ENCODE measurements at regions of chr3 and their contacts with region 1.

Region 1: DNA sequence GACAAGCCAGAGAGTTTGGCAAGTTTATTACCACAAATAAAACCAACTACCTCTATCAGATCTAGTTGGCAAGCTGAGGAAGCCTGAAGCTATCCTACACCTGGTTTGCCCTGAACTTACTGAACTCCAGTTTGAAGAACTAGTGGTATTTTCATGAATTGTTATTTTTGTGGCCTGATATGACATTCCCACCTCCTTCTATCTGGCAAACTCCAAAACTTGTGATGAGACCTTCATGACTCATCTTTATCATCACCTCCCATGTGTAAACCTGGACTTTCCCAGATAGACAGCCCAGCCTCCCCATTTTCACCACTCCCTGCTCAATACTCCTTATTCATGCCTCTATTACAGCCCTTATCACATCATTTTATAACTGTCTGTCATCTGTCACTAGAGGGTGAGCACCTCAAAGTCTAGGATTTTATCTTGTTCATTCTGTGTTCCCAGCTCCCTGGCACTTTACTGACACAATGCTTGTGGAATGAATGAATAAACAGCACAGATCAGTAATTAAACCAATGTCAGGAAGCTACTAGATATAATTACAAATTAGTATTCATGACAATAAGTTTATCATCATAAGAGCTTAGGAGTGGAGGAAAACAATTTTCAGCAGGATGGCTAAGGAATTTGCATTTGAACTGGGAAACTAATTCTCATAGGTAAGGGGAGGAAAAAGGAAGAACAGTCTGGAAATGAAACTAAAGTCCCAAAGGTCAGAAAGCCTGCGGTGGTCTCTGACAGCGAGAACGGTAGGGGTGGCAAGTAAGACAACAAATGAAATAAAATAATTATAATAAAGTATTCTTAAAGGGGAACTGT is 13.2 kb upstream of the TRANK1 start:
- DNase-seq: no peak
- H3K4me3 Mint-ChIP-seq: no peak overlapping the region
- H3K27ac Mint-ChIP-seq: no peak overlapping the region
- H3K4me1 Mint-ChIP-seq: peaks cover 12% of the 10 kb centered on the region
- H3K27me3 Mint-ChIP-seq: peaks cover 4% of the 10 kb centered on the region

Region 2: GRCh38 chr3:36729204-36730056 is 228.6 kb before region 1 on chr3:
- intact Hi-C with region 1: loop called (anchors 1 kb)
- DNase-seq: no peak
- H3K4me3 Mint-ChIP-seq: no peak overlapping the region
- H3K27ac Mint-ChIP-seq: no peak overlapping the region
- H3K4me1 Mint-ChIP-seq: no peaks in the 10 kb centered on the region
- H3K27me3 Mint-ChIP-seq: peaks cover 8% of the 10 kb centered on the region

Region 3: GRCh38 chr3:36792342-36792741 is 165.7 kb before region 1 on chr3:
- intact Hi-C with region 1: loop called (anchors 1 kb)
- DNase-seq: no peak
- H3K4me3 Mint-ChIP-seq: no peak overlapping the region
- H3K27ac Mint-ChIP-seq: no peak overlapping the region
- H3K4me1 Mint-ChIP-seq: no peaks in the 10 kb centered on the region
- H3K27me3 Mint-ChIP-seq: peaks cover 29% of the 10 kb centered on the region

Region 4: GRCh38 chr3:36843065-36844051 is 114.7 kb before region 1 on chr3:
- intact Hi-C with region 1: loop called (anchors 5 kb)
- DNase-seq: peak; percentile 36
- H3K4me3 Mint-ChIP-seq: peak overlapping the region; percentile 6
- H3K27ac Mint-ChIP-seq: no peak overlapping the region
- H3K4me1 Mint-ChIP-seq: peaks cover 30% of the 10 kb centered on the region
- H3K27me3 Mint-ChIP-seq: peaks cover 2% of the 10 kb centered on the region

Region 5: GRCh38 chr3:36868614-36869436 is 89.2 kb before region 1 on chr3:
- intact Hi-C with region 1: loop called (anchors 2 kb)
- DNase-seq: peak; percentile 20
- H3K4me3 Mint-ChIP-seq: no peak overlapping the region
- H3K27ac Mint-ChIP-seq: no peak overlapping the region
- H3K4me1 Mint-ChIP-seq: peaks cover 6% of the 10 kb centered on the region
- H3K27me3 Mint-ChIP-seq: peaks cover 18% of the 10 kb centered on the region

Region 6: GRCh38 chr3:36876181-36876936 is 81.7 kb before region 1 on chr3:
- intact Hi-C with region 1: loop called (anchors 2 kb)
- DNase-seq: peak; percentile 28
- H3K4me3 Mint-ChIP-seq: peak overlapping the region; percentile 48
- H3K27ac Mint-ChIP-seq: peak overlapping the region; percentile 72
- H3K4me1 Mint-ChIP-seq: peaks cover 27% of the 10 kb centered on the region
- H3K27me3 Mint-ChIP-seq: peaks cover 20% of the 10 kb centered on the region

Measured in activated T-helper 2 cell treated with anti-CD3 and anti-CD28 coated beads, Interferon-gamma antibody, Interleukin-2, Interleukin-4, amounts not matched to agents 10 μg/mL and 5 μg/mL and 100 μg/mL, durations not matched to agents 14 hours and 24 hours and 36 hours (primary cell).